Esophagus squamous epithelium (tissue), 5 donors: ENCODE measurements at regions of chr16 and their contacts with region 1.

Region 1: GRCh38 chr16:15427648-15428239 is 6.6 kb upstream of the BMERB1 start:
- DNase-seq: no peak
- H3K4me3 ChIP-seq: peak overlapping the region in 2 of 4 donors; percentile 16 to 41
- H3K27ac ChIP-seq: peak overlapping the region in 3 of 4 donors; percentile 13 to 76 (median 30)
- H3K4me1 ChIP-seq: peaks cover 0 to 5% (median 0%) of the 10 kb centered on the region in 3 donors
- H3K27me3 ChIP-seq: no peaks in the 10 kb centered on the region
- CTCF ChIP-seq: peak; percentile 35 to 67 (median 64)
- POLR2A ChIP-seq: no peak

Region 2: DNA sequence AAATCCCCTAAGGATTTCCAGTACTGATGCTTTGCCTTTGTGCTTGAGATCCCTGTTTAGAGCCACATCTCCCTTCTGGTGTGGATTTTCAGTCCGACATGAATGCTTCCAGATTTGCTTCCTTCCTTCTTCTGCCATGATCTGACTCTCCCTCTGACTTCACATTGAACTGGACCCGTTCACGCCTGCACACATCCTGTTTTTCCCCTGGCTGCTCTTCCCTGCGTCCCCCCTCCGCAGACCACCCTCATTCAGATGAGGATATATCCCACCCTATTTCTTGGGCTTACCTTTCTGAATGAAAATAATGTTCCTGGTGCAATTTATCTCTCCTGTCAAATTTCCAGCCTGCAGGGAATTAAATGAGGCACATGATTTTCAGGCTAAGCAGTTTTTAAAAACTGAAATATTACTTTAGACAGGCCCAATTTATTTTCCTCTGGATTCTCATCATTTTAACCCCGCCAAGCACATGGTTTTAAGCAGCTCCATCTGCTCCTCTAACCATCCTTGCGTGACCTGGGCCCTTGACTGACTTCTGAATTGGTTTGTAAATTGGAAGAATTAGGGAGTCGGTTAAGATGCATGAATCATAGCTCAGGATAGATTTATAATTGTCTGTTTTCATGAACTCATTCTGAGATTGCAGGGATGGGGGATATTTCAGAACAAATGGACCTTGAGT is 65.9 kb after region 1 on chr16:
- intact Hi-C with region 1: loop called (anchors 10 kb)
- DNase-seq: no peak
- H3K4me3 ChIP-seq: no peak overlapping the region
- H3K27ac ChIP-seq: peak overlapping the region in 3 of 4 donors; percentile 54 to 66 (median 64)
- H3K4me1 ChIP-seq: peaks cover 3 to 49% (median 21%) of the 10 kb centered on the region in 3 donors
- H3K27me3 ChIP-seq: no peaks in the 10 kb centered on the region
- CTCF ChIP-seq: no peak
- POLR2A ChIP-seq: no peak

Region 3: DNA sequence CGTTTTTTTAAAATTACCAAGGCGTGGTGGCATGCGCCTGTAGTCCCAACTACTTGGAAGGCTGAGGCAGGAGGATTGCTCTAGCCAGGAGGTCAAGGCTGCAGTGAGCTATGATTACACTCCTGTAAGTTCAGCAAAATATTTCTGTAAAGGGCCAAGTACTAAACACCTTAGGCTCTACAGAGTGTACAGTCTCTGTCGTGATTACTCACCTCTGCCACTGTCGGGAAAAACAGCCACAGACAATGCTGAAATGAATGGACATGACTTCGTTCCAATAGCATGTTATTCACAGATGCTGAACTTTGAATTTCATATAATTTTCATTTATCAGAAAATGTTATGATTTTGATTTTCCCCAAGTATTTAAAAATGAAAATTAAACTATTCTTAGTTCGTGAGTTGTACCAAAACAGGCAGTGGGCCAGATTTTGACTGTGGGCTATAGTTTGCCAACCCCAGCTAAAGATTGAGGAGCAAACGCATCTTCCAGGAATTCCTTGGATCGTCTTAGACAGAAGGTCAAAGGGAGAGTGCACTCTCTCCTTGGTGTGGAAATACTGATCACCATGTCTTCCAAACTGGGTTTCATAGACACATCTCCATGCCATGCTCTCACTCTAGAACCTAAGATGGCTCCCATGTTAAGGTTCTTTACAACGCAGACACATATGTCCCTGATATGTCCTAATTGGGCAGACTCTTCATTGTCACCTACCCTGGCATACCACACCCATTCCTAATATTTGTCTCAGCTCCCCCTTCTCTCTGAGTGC is 125.8 kb after region 1 on chr16:
- intact Hi-C with region 1: no loop called
- DNase-seq: no peak
- H3K4me3 ChIP-seq: no peak overlapping the region
- H3K27ac ChIP-seq: no peak overlapping the region
- H3K4me1 ChIP-seq: peaks cover 0 to 13% (median 9%) of the 10 kb centered on the region in 3 donors
- H3K27me3 ChIP-seq: no peaks in the 10 kb centered on the region
- CTCF ChIP-seq: no peak
- POLR2A ChIP-seq: no peak

Region 4: GRCh38 chr16:15618392-15618791 is 190.6 kb after region 1 on chr16:
- intact Hi-C with region 1: no loop called
- DNase-seq: no peak
- H3K4me3 ChIP-seq: no peak overlapping the region
- H3K27ac ChIP-seq: no peak overlapping the region
- H3K4me1 ChIP-seq: no peaks in the 10 kb centered on the region
- H3K27me3 ChIP-seq: no peaks in the 10 kb centered on the region
- CTCF ChIP-seq: no peak
- POLR2A ChIP-seq: no peak